Activated B cell treated with CpG ODN at 0.5 μM for 24 hours (primary cell): ENCODE measurements at regions of chrX and their contacts with region 1.

Region 1: DNA sequence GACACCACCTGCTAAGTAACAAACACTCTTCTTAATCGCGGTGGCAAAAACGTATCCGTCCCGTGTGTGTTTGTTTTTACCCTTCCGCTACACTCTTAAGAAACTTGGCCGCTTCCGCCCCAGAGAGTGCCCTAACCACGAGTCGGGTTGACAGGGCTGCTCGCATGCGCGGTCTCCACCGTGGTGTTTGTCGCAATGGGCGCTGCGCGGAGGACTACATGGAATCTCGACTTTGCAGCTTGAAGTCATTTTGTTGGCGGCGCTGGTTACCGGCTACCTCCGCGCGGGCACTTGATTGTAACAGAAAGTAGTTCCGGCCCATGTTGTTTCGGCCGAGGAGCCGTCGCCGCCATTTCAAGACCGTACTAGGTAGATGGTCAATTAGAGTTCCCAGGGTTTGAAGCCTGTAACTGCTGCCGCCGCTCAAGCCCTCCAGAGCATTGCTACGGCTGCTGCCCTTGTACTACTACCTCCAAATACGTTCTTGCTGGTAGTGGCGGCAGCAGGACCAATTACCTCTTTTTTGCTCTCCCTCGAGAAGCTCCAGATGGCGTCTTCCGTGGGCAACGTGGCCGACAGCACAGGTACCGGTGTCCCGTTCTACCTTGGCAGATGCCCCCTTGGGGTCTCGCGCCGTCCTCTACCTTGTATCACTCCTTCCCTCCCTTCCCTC is at the start of gene OGT:
- DNase-seq: peak; percentile 77
- ATAC-seq: peak; percentile 82
- H3K4me3 Mint-ChIP-seq: peak within 1 kb of the TSS; percentile 96
- H3K27ac Mint-ChIP-seq: peak within 1 kb of the TSS; percentile 93
- H3K4me1 Mint-ChIP-seq: peaks cover 24% of the 10 kb centered on the region
- H3K27me3 Mint-ChIP-seq: no peaks in the 10 kb centered on the region
- CTCF ChIP-seq: no peak
- total RNA-seq, gene OGT: 223 and 272 TPM in 2 replicates

Region 2: DNA sequence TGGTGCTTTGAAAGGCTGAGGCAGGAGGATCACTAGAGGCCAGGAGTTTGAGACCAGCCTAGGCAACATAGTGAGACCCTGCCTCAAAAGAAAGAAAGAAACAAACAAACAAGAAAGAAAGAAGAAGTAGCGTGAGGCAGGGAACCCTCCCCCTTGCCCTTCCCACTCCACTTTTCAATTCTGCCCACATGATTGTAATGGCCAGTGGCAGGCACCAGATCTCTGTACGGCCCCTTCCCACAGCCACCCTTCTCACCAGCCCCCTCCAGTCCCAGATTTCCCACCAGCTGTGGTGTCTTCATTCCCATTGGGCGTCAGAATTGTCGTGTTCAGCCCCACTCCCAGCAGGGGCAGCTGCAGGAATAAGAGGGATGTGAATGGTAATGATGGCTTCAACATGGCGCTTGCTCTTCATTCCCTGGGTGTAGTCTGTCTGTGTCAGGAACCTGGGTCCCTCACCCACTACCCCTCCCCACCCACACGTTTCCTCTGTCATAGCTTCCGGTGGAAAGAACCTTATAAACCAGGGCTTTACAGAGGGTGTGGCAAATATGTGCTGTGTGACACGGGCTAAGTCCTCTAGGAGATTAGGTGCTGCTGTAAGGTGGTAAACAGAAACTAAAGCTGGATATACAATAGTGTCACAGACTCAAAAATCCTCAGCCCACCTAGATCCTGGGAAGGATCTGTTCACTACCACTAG is 421.6 kb before region 1 on chrX and contains the start of gene IL2RG:
- CTCF ChIA-PET with region 1: no interaction called
- POLR2A ChIA-PET with region 1: no interaction called
- intact Hi-C with region 1: loop called (anchors 5 kb)
- DNase-seq: peak; percentile 37
- ATAC-seq: peak; percentile 90
- H3K4me3 Mint-ChIP-seq: peak within 1 kb of the TSS; percentile 95
- H3K27ac Mint-ChIP-seq: peak within 1 kb of the TSS; percentile 99
- H3K4me1 Mint-ChIP-seq: peaks cover 67% of the 10 kb centered on the region
- H3K27me3 Mint-ChIP-seq: no peaks in the 10 kb centered on the region
- CTCF ChIP-seq: no peak
- total RNA-seq, gene IL2RG: 261 and 264 TPM in 2 replicates

Region 3: GRCh38 chrX:71254092-71254941 is 278.6 kb before region 1 on chrX and contains the start of gene ZMYM3:
- CTCF ChIA-PET with region 1: no interaction called
- POLR2A ChIA-PET with region 1: interaction called, 6 read pairs
- intact Hi-C with region 1: loop called (anchors 10 kb)
- DNase-seq: peak; percentile 64
- ATAC-seq: peak; percentile 85
- H3K4me3 Mint-ChIP-seq: peak within 1 kb of the TSS; percentile 93
- H3K27ac Mint-ChIP-seq: peak within 1 kb of the TSS; percentile 87
- H3K4me1 Mint-ChIP-seq: peaks cover 21% of the 10 kb centered on the region
- H3K27me3 Mint-ChIP-seq: no peaks in the 10 kb centered on the region
- CTCF ChIP-seq: no peak
- total RNA-seq, gene ZMYM3: 27.9 and 28.2 TPM in 2 replicates

Region 4: DNA sequence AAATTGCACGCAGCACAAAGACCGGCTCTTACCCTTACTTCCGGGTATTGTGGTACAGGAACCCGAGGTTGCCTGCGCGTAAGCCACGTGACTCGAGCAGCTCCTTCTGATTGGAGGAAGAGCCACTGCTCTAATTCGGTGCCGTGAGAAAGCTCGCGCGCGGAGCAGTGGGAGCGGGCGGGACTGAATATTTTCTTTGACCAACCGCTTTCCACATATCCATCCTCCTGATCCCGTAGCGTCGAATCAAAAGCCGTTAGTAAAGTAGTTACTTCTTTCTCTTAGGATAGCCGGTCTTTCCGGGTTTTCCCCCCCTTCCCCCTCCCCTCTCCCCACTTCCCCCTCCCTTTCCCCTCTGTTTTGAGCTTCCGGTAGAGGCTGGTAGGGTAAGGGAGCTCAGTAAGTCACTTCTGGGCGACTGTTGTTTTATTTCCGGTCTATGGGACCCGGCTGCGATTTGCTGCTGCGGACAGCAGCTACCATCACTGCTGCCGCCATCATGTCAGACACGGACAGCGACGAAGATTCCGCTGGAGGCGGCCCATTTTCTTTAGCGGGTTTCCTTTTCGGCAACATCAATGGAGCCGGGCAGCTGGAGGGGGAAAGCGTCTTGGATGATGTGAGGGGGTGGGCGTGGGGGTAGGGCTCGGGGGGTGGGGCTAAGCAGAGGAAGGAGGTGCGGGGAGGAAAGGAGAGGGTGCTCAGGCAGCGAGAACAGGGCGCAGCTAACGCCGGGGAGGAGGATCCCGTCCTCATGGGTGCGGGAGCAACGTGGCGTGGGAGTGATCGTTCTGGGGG is 166.8 kb before region 1 on chrX and contains the start of gene TAF1:
- CTCF ChIA-PET with region 1: no interaction called
- POLR2A ChIA-PET with region 1: interaction called, 79 read pairs
- intact Hi-C with region 1: loop called (anchors 1 kb)
- DNase-seq: peak; percentile 69
- ATAC-seq: peak; percentile 87
- H3K4me3 Mint-ChIP-seq: peak within 1 kb of the TSS; percentile 99
- H3K27ac Mint-ChIP-seq: peak within 1 kb of the TSS; percentile 99
- H3K4me1 Mint-ChIP-seq: peaks cover 21% of the 10 kb centered on the region
- H3K27me3 Mint-ChIP-seq: no peaks in the 10 kb centered on the region
- CTCF ChIP-seq: no peak
- total RNA-seq, gene TAF1: 64.0 and 70.0 TPM in 2 replicates

Region 5: GRCh38 chrX:71466979-71467523 is 65.8 kb before region 1 on chrX:
- CTCF ChIA-PET with region 1: no interaction called
- POLR2A ChIA-PET with region 1: no interaction called
- intact Hi-C with region 1: loop called (anchors 5 kb)
- DNase-seq: no peak
- ATAC-seq: no peak
- H3K4me3 Mint-ChIP-seq: no peak overlapping the region
- H3K27ac Mint-ChIP-seq: no peak overlapping the region
- H3K4me1 Mint-ChIP-seq: no peaks in the 10 kb centered on the region
- H3K27me3 Mint-ChIP-seq: no peaks in the 10 kb centered on the region
- CTCF ChIP-seq: no peak

Region 6: GRCh38 chrX:71622576-71623450 is 89.9 kb after region 1 on chrX:
- CTCF ChIA-PET with region 1: no interaction called
- POLR2A ChIA-PET with region 1: interaction called, 20 read pairs
- intact Hi-C with region 1: no loop called
- DNase-seq: peak; percentile 25
- ATAC-seq: peak; percentile 45
- H3K4me3 Mint-ChIP-seq: peak overlapping the region; percentile 57
- H3K27ac Mint-ChIP-seq: peak overlapping the region; percentile 73
- H3K4me1 Mint-ChIP-seq: peaks cover 63% of the 10 kb centered on the region
- H3K27me3 Mint-ChIP-seq: no peaks in the 10 kb centered on the region
- CTCF ChIP-seq: no peak